AG04449 (cell line): ENCODE measurements at regions of chr2 and their contacts with region 1.

Region 1: GRCh38 chr2:236343400-236344161 is 79.4 kb upstream of the ASB18 start:
- DNase-seq: peak; percentile 38
- H3K4me3 ChIP-seq: no peak overlapping the region
- CTCF ChIP-seq: peak; percentile 56

Region 2: GRCh38 chr2:236452238-236452637 is 108.7 kb after region 1 on chr2:
- CTCF ChIA-PET with region 1: no interaction called
- POLR2A ChIA-PET with region 1: no interaction called
- DNase-seq: no peak
- H3K4me3 ChIP-seq: no peak overlapping the region
- CTCF ChIP-seq: no peak

Region 3: GRCh38 chr2:237055386-237056299 is 712.1 kb after region 1 on chr2:
- CTCF ChIA-PET with region 1: interaction called, 394 read pairs
- POLR2A ChIA-PET with region 1: no interaction called
- DNase-seq: no peak
- H3K4me3 ChIP-seq: no peak overlapping the region
- CTCF ChIP-seq: no peak

Region 4: GRCh38 chr2:237072067-237072931 is 728.7 kb after region 1 on chr2:
- CTCF ChIA-PET with region 1: interaction called, 394 read pairs
- POLR2A ChIA-PET with region 1: no interaction called
- DNase-seq: no peak
- H3K4me3 ChIP-seq: no peak overlapping the region
- CTCF ChIP-seq: peak; percentile 86